Activated CD4-positive, alpha-beta T cell treated with anti-CD3 and anti-CD28 coated beads, Interleukin-2, amount 10 ng/mL, durations not matched to agents 24 days and 14 days (primary cell): ENCODE measurements at regions of chr11 and their contacts with region 1.

Region 1: DNA sequence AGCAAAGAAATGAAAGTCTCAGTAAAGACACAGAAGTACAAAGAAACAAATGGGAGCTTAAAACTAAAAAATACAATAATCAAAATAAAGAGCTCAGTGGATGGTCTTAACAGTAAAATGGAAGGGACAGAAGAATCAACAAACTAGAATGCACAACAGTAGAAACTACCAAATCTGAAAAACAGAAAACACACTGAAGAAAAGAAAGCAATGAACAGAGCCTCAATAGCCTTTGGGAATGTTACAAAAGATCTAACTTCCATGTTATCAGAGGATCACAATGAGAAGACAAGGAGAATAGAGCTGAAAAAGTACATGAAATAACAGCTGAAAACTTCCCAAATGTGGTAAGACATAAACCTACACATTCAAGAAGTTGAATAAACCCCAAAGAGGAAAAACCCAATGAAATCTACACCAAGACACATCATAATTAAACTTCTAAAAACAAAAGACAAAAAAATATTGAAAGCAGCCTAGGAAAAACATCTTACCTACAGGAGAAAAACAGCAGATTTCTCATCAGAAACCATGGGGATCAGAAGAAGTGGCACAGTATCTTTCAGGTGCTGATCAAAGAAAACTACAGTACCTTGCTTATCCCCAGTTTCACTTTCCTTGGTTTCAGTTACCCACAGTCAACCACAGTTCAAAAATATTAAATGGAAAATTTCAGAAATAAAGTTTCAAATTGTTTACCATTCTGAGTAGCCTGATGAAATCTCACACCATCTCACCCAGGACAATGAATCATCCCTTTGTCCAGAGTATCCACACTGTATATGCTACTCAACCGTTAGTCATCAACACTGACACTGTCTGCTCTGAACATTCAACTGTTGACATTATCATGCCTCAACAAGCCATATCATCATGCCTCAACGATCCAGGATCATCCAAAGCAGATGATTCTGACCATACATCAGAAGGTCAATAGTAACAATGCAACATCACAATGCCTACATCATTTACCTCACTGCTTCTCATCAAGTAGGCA is 22.2 kb downstream of the RRAS2 start:
- DNase-seq: peak; percentile 65
- H3K4me3 Mint-ChIP-seq: peak overlapping the region; percentile 5
- H3K27ac Mint-ChIP-seq: peak overlapping the region; percentile 77
- H3K4me1 Mint-ChIP-seq: peaks cover 51% of the 10 kb centered on the region
- H3K27me3 Mint-ChIP-seq: no peaks in the 10 kb centered on the region

Region 2: DNA sequence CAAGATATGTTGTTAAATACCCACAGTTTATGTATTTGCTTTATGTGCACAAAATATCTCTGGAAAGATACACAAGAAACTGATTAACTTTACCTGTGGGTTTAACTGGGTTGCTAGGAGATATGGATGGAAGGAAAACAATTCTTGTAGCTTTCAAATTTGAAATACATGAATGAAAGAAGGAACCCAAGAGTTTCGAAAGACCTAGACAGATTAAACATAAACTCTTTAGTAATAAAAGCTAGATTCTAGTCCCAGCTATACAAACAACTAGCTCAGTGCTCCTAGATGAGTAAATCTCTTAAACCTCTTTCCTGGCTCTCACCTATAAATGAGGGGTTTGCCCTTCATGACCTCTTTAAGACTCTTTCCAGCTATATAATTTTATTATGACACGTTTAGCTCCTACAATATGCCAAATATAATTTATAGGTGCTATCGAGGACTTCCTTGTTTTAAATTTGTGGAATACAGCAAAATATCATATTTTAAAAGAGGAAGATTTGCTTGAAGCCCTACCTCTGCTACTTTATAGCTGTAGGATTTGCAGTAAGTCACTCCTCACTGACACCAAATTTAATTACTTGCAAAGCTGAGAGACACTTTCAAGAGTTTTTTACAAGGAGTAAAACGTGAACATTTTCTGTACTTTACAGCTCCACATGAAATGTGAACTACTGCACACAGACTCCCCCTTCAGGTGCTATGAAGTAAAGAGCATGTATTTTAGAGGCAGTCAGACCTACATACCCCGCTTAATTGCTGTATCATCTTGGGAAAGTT is 28.5 kb before region 1 on chr11:
- intact Hi-C with region 1: loop called (anchors 1 kb)
- DNase-seq: no peak
- H3K4me3 Mint-ChIP-seq: no peak overlapping the region
- H3K27ac Mint-ChIP-seq: no peak overlapping the region
- H3K4me1 Mint-ChIP-seq: peaks cover 24% of the 10 kb centered on the region
- H3K27me3 Mint-ChIP-seq: no peaks in the 10 kb centered on the region

Region 3: DNA sequence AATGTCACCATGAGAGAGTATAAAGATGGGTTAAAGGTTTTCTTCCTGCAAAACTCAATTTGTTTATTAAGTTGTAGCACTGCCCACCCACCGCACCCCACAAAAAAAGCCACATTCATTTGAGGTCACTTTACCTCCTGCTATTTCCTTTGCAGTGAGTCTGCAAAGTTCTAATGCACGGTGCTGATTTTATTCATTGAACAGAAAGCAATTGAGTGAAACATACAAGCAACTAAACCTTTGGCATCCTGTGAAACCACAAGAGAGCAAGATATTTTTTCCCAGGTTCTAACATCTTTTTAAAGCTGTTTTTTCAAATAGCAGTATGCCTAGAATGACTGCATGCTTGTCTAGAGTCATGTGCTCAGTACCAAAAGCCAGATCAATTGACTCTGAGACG is 16.8 kb before region 1 on chr11:
- intact Hi-C with region 1: loop called (anchors 1 kb)
- DNase-seq: peak; percentile 83
- H3K4me3 Mint-ChIP-seq: peak overlapping the region; percentile 22
- H3K27ac Mint-ChIP-seq: peak overlapping the region; percentile 62
- H3K4me1 Mint-ChIP-seq: peaks cover 54% of the 10 kb centered on the region
- H3K27me3 Mint-ChIP-seq: no peaks in the 10 kb centered on the region

Region 4: GRCh38 chr11:14350215-14350614 is 13.4 kb after region 1 on chr11:
- intact Hi-C with region 1: no loop called
- DNase-seq: no peak
- H3K4me3 Mint-ChIP-seq: no peak overlapping the region
- H3K27ac Mint-ChIP-seq: no peak overlapping the region
- H3K4me1 Mint-ChIP-seq: peaks cover 35% of the 10 kb centered on the region
- H3K27me3 Mint-ChIP-seq: no peaks in the 10 kb centered on the region

Region 5: GRCh38 chr11:14373931-14374646 is 37.3 kb after region 1 on chr11:
- intact Hi-C with region 1: loop called (anchors 1 kb)
- DNase-seq: no peak
- H3K4me3 Mint-ChIP-seq: no peak overlapping the region
- H3K27ac Mint-ChIP-seq: peak overlapping the region; percentile 68
- H3K4me1 Mint-ChIP-seq: peaks cover 48% of the 10 kb centered on the region
- H3K27me3 Mint-ChIP-seq: peaks cover 5% of the 10 kb centered on the region

Region 6: DNA sequence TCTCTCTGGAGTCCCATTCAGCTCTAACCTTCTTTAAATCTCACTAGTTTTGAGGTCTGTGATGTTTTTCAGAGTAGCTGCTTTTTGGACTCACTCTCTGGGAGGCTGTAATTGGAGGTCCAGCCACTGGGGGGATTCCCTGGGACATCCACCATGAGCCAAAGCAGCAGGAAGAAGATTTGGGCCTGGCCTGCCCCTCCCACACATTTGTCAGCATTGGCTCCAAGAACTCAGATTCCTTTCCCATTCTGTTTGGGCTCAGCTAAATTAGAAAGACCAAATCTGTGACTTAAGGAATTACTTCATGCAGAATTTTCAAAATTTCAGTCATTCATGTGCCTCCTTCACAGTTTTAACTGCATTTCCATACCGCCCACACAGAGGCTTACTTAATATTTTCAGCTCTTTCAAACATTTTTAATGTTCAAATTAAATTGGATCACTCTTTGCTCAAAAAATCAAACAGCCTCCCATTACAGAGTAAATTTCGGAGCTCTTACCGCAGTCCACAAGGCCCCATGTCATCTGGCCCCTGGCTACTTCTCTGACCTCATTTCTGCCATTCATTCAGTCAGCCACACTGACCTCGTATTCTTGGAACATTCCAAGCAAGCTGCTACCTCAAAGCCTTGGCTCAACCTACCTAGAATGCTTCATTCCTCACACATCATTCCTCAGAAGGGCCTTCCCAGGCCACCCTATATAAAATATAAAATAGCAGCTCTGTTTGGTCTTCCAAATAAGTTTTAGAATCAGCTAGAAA is 76.7 kb after region 1 on chr11:
- intact Hi-C with region 1: loop called (anchors 1 kb)
- DNase-seq: no peak
- H3K4me3 Mint-ChIP-seq: no peak overlapping the region
- H3K27ac Mint-ChIP-seq: no peak overlapping the region
- H3K4me1 Mint-ChIP-seq: peaks cover 62% of the 10 kb centered on the region
- H3K27me3 Mint-ChIP-seq: no peaks in the 10 kb centered on the region